ENCODE measurements at regions of chr4 and their contacts with region 1.

Region 1: DNA sequence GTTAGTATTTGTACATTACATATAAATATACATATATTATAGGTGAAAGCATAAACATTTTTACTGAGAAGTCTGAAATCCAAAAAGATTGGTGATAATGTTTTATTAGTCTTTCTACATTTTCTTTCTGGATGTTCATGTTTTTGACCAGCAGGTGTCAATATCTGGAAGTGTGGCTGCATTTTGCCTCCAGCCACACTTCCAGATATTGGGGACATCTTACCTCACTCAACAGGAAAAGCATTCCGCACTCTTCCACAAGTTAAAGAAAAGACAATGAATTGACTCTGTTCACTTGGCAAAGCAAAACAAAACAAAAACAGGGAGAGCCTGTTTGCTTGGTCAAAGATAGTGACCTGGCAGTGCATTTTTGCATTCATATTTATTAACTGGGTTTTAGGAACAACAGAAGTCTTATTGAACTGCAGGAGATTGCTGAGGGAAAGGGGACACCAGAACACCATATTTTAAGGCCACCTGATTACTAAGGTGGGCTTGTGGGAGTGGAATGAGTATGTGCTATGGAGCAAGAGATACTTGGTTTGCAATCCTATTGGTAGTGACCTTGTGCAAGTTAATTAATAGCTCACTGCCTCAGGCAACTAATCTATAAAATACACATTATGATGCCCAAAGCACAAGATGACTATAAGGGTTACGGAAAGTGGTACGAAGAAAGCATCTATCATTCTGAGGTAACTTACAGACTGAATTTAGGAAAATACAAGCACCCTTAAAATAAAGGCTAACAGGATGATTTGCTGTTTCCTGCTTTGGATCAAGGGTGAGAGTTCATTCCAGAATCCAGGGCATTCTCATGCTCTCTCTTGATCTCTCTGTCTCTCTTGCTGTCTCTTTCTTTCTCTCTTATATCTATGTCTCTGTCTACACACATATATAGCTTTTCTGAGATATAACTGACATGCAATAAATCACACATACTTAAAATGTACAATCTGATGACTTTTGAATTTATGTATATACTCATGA is 389.9 kb upstream of the EMCN start:
- DNase-seq: peak; percentile 47
- H3K4me3 ChIP-seq: no peak overlapping the region
- H3K27ac ChIP-seq: no peak overlapping the region
- H3K4me1 ChIP-seq: no peaks in the 10 kb centered on the region
- H3K27me3 ChIP-seq: no peaks in the 10 kb centered on the region
- CTCF ChIP-seq: peak; percentile 21 to 40
- POLR2A ChIP-seq: no peak

Region 2: GRCh38 chr4:100421361-100421978 is 486.3 kb before region 1 on chr4:
- CTCF ChIA-PET with region 1: no interaction called
- POLR2A ChIA-PET with region 1: no interaction called
- dilution Hi-C with region 1: no loop called
- intact Hi-C with region 1: loop called (anchors 5 kb)
- DNase-seq: peak; percentile 73
- H3K4me3 ChIP-seq: no peak overlapping the region
- H3K27ac ChIP-seq: peak overlapping the region; percentile 43
- H3K4me1 ChIP-seq: peaks cover 18% of the 10 kb centered on the region
- H3K27me3 ChIP-seq: no peaks in the 10 kb centered on the region
- CTCF ChIP-seq: peak; percentile 30 to 44
- POLR2A ChIP-seq: no peak

Region 3: GRCh38 chr4:100721077-100721476 is 186.7 kb before region 1 on chr4:
- CTCF ChIA-PET with region 1: no interaction called
- POLR2A ChIA-PET with region 1: no interaction called
- dilution Hi-C with region 1: no loop called
- intact Hi-C with region 1: no loop called
- DNase-seq: no peak
- H3K4me3 ChIP-seq: no peak overlapping the region
- H3K27ac ChIP-seq: no peak overlapping the region
- H3K4me1 ChIP-seq: no peaks in the 10 kb centered on the region
- H3K27me3 ChIP-seq: no peaks in the 10 kb centered on the region
- CTCF ChIP-seq: no peak
- POLR2A ChIP-seq: no peak

Region 4: GRCh38 chr4:100880007-100880406 is 27.8 kb before region 1 on chr4:
- CTCF ChIA-PET with region 1: no interaction called
- POLR2A ChIA-PET with region 1: no interaction called
- dilution Hi-C with region 1: no loop called
- intact Hi-C with region 1: no loop called
- DNase-seq: peak; percentile 43
- H3K4me3 ChIP-seq: no peak overlapping the region
- H3K27ac ChIP-seq: no peak overlapping the region
- H3K4me1 ChIP-seq: peaks cover 4% of the 10 kb centered on the region
- H3K27me3 ChIP-seq: no peaks in the 10 kb centered on the region
- CTCF ChIP-seq: no peak
- POLR2A ChIP-seq: no peak

Region 5: GRCh38 chr4:101205916-101206315 is 298.2 kb after region 1 on chr4:
- CTCF ChIA-PET with region 1: no interaction called
- POLR2A ChIA-PET with region 1: no interaction called
- dilution Hi-C with region 1: no loop called
- intact Hi-C with region 1: no loop called
- DNase-seq: no peak
- H3K4me3 ChIP-seq: no peak overlapping the region
- H3K27ac ChIP-seq: no peak overlapping the region
- H3K4me1 ChIP-seq: peaks cover 3% of the 10 kb centered on the region
- H3K27me3 ChIP-seq: no peaks in the 10 kb centered on the region
- CTCF ChIP-seq: no peak
- POLR2A ChIP-seq: no peak

Region 6: DNA sequence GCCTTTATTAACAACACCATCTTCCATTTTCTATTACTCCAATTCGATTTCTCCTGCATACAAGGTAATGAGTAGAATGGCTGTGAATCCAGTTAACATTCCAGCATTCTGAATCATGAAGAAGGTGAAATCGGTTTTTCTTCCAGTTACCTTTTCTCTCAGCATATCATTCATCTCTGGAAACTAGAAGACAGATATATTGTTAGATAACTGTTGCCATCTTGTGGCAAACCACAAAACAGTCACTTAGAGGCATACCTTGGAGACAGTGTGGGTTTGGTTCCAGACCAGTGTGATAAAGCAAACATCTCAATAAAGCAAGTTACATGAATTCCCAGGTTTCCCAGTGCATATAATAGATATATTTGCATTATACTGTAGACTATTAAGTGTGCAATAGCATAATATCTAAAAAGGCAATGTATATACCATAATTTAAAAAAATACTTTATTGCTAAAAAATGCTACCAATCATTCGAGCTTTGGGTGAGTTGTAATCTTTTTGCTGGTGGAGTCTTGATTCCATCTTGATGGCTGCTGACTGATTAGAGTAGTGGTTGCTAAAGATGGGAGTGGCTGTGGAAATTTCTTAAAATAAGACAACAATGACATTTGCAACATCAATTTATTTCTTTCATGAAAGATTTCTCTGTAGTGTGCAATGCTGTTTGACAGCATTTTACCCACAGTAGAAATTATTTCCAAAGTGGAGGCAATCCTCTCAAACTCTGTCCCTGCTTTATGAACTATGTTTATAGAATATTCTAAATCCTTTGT is 1355.4 kb after region 1 on chr4:
- CTCF ChIA-PET with region 1: interaction called, 3 read pairs
- POLR2A ChIA-PET with region 1: no interaction called
- dilution Hi-C with region 1: no loop called
- intact Hi-C with region 1: loop called (anchors 5 kb)
- DNase-seq: peak; percentile 64
- H3K4me3 ChIP-seq: no peak overlapping the region
- H3K27ac ChIP-seq: no peak overlapping the region
- H3K4me1 ChIP-seq: peaks cover 4% of the 10 kb centered on the region
- H3K27me3 ChIP-seq: no peaks in the 10 kb centered on the region
- CTCF ChIP-seq: peak; percentile 42 to 52
- POLR2A ChIP-seq: no peak

Measured in endothelial cell of umbilical vein (primary cell).